Activated naive CD4-positive, alpha-beta T cell treated with anti-CD3 and anti-CD28 coated beads for 36 hours (primary cell): ENCODE measurements at regions of chr1 and their contacts with region 1.

Region 1: DNA sequence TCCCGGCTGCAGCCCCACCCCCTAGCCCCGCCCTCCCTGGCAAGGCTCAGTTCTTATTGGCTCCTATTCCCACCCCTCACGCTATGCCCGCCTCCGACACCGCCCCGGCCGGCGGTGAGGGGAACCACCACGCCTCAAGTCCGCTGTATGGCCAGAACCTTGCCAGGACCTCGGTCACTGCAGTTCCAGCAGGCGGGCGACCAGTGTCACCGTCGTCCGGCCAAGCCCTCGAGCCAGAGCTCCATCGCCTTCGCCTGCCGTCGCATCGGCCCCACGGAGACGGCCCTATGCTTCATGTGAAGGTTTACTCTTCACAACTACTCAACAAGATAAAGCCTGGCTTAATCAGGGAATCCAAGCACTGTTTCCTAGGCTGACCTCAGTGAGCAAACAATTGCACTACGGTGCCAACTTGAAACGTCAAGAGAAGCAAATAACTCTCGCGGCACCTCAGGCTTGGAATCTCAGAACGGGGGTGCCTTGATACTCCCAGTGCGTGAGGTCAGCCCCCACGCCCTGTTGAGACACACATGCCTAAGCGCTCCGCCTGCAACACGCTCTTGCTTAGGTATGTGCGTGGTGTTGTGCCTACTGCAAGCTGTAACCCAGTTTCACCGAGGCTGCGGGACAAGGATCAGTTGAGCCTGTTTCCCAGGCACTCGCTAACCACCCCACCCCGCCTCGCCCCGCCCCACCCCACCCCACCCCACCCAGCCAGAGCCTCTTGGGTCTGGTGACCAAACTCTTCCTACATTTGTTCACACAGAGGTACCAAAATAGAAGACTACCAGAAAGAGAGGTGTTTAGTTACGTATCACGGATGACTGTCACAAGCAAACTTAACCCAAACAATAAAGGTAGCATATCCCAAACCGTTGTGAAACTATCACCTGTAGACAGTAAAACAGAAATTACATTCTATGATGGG is 498 bp upstream of the DENND2C start:
- DNase-seq: peak; percentile 87
- H3K4me3 Mint-ChIP-seq: peak overlapping the region; percentile 87
- H3K27ac Mint-ChIP-seq: no peak overlapping the region
- H3K4me1 Mint-ChIP-seq: peaks cover 4% of the 10 kb centered on the region
- H3K27me3 Mint-ChIP-seq: peaks cover 1% of the 10 kb centered on the region

Region 2: GRCh38 chr1:114610546-114611245 is 59.7 kb before region 1 on chr1:
- CTCF ChIA-PET with region 1: no interaction called
- intact Hi-C with region 1: no loop called
- DNase-seq: no peak
- H3K4me3 Mint-ChIP-seq: no peak overlapping the region
- H3K27ac Mint-ChIP-seq: no peak overlapping the region
- H3K4me1 Mint-ChIP-seq: no peaks in the 10 kb centered on the region
- H3K27me3 Mint-ChIP-seq: peaks cover 2% of the 10 kb centered on the region

Region 3: DNA sequence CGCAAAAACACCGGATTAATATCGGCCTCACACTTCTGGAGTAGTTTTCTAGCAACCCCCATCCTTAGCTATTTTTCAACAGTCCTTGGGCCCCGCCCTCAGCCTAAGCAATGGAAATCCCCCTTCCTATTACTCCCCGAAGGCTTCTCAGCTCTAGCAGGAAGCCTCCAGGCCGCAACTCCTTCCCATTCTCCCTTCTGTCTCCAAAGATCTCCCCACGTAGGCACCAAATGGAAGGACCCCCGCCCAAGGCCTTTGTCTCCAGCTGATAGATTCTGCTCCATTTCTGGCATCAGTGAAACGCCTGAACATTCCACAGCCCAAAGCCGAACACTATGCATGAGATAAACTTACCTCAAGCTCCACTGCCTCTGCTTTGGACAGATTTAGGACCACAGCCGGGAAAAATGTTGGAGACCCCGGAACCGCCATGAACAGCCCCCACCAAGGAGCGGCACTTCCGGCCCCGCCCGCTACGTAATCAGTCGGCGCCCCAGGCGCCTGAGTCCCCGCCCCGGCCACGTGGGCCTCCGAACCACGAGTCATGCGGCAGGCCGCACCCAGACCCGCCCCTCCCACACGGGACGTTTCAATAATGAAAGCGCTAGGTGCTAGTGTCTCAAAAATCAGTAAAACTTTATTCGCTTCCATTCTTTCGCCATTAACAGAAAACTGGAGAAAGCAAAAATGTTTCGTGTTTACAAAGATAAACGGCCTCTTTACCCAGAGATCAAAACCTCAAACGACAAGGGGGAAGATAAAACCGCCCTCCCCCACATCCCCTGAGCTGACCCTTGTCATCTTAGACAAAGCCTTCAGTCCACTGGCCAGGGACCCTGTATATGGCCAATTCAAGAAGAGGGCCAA is 46.2 kb after region 1 on chr1 and contains the start of gene NRAS:
- CTCF ChIA-PET with region 1: interaction called, 4 read pairs
- intact Hi-C with region 1: loop called (anchors 1 kb)
- DNase-seq: peak; percentile 96
- H3K4me3 Mint-ChIP-seq: peak within 1 kb of the TSS; percentile 98
- H3K27ac Mint-ChIP-seq: peak within 1 kb of the TSS; percentile 99
- H3K4me1 Mint-ChIP-seq: peaks cover 27% of the 10 kb centered on the region
- H3K27me3 Mint-ChIP-seq: no peaks in the 10 kb centered on the region
- total RNA-seq, gene NRAS: 42.1 to 43.9 TPM

Region 4: DNA sequence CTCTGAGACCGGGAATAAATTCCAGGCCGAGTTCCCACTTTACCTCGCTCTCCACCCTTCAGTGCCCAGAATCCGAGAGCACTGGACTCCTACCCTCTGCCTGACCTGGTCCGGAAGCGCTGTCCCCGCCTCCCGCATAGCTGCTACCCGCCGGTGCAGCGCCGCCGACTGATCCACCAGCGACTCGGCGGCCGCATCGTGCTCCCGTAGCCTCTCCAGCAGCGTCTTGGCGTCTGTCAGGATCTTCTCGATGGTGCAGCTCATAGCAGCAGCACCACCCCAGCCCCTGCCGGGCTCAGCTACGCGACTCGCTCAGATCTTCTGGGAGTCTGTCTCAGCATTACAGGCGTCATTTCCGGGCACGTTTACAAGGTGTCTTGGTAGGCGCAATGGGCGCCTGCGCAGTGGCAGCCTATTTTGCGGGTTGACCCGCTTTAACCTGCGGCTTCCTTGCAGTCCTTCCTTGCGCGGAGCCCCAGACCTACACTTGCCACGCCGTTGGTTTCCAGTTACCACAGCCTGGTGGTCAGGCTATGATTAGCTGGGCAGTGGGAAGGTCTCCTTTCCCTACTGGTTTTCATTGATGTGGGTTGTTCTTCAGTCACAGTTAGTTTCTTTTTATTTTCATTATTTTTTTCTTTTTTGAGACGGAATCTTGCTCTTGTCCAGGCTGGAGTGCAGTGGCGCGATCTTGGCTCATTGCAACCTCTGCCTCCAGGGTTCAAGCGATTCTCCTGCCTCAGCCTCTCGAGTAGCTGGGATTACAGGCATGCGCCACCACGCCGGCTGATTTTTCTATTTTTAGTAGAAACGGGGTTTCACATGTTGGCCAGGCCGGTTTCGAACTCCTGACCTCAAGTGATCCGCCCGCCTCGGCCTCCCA is 110.2 kb after region 1 on chr1 and contains the start of gene SIKE1:
- CTCF ChIA-PET with region 1: no interaction called
- intact Hi-C with region 1: loop called (anchors 1 kb)
- DNase-seq: peak; percentile 97
- H3K4me3 Mint-ChIP-seq: peak within 1 kb of the TSS; percentile 100
- H3K27ac Mint-ChIP-seq: peak within 1 kb of the TSS; percentile 97
- H3K4me1 Mint-ChIP-seq: peaks cover 24% of the 10 kb centered on the region
- H3K27me3 Mint-ChIP-seq: no peaks in the 10 kb centered on the region
- total RNA-seq, gene SIKE1: 60.2 to 60.6 TPM

Region 5: DNA sequence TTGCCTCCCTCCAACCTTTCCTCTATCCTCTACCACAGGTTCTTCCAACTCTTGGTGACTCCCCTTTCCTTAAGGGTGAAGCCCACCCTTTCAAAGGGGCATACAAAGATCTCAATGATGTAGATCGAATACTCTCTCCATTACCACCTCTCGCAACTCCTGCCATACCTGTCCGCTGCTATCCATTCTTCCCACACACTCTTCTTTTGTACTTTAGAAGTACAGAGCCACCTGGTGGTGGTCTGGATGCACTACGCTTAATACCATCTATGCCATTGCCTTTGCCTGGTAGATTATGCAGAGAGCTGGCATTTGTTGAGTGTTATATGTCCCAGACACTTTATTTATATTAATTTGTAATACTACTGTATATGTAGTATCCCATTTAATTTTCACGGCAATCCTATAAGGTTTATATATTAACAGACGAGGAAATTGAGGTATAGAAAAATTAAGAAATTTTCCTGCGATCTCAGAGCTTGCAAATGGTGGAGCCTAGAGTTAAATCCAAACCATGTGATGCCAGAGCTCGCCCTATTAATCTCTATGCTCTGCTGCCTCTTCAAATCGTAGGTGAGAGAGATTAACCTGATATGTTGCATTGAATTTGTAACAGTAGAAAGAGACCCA is 382.2 kb after region 1 on chr1:
- CTCF ChIA-PET with region 1: no interaction called
- intact Hi-C with region 1: loop called (anchors 10 kb)
- DNase-seq: peak; percentile 73
- H3K4me3 Mint-ChIP-seq: no peak overlapping the region
- H3K27ac Mint-ChIP-seq: no peak overlapping the region
- H3K4me1 Mint-ChIP-seq: no peaks in the 10 kb centered on the region
- H3K27me3 Mint-ChIP-seq: no peaks in the 10 kb centered on the region